ENCODE measurements at regions of chr7 and their contacts with region 1.

Region 1: DNA sequence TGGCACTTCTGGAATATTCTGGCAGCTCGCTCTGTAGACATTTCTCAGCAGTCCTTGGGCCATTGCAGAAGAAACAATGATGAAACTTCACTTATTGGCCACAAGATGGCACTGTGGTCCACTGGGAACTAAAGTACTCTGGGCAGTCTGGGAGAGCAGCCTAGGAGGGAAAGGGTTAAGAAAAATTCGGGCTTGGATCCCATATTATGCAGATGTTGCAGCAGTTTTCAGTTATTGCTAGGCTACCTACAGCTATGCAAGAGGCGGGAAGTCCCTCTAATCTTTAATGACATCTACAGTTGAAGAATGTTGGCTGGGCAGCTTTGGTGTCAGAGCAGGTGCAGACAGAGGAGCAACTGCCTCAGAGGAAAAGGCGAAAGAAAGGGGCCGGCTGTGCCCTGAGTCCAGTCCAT is 201.7 kb upstream of the PRSS58 start:
- DNase-seq: peak; percentile 30 to 61
- ATAC-seq: peak; percentile 80 to 96; a peak in 5 of 6 replicates
- H3K4me3 ChIP-seq: no peak overlapping the region
- H3K27ac ChIP-seq: no peak overlapping the region
- H3K4me1 ChIP-seq: no peaks in the 10 kb centered on the region
- CTCF ChIP-seq: peak; percentile 69
- EP300 ChIP-seq: no peak
- POLR2A ChIP-seq: no peak
- RAD21 ChIP-seq: peak; percentile 38 to 41

Region 2: DNA sequence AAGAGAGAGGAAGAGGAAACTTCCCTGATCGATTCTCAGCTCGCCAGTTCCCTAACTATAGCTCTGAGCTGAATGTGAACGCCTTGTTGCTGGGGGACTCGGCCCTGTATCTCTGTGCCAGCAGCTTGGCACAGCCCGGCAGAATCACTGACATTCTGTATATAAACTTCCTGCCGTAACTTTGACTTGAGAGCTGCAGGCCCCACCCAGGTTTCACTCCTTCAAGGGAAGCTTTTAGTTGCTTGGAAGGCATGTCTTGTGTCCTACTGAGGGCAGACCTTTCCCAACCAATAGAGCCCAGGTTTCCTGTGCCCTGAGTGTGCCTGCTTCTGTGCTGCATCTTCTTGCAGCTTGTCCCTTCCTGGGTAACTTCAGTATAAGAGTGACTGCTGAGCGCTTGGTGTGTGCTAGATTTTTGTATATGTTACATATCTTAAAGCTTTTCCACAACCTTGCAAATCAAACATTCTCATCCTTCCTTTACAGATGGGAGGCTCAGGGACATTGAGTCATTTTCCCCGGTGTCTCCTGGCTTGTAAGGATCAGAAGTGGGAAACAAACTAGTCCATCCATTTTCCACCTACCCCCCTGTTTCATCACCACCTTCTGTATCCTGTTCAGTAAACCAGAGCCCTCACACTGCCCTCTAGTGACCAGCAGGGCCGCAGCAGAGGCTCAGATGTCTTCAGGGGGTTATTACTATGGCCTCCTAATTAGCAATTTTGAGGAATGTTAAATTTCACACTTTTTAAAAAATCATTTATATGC is 23.5 kb after region 1 on chr7:
- CTCF ChIA-PET with region 1: interaction called, 12 read pairs
- POLR2A ChIA-PET with region 1: no interaction called
- DNase-seq: peak; percentile 25
- ATAC-seq: peak; percentile 80 to 88
- H3K4me3 ChIP-seq: no peak overlapping the region
- H3K27ac ChIP-seq: no peak overlapping the region
- H3K4me1 ChIP-seq: no peaks in the 10 kb centered on the region
- CTCF ChIP-seq: peak; percentile 70
- EP300 ChIP-seq: no peak
- POLR2A ChIP-seq: no peak
- RAD21 ChIP-seq: peak in 1 of 2 experiments; percentile 40; a peak in 3 of 5 replicates